ENCODE measurements at regions of chr7 and their contacts with region 1.

Region 1: GRCh38 chr7:76314042-76314721 is 11.7 kb downstream of the HSPB1 start:
- DNase-seq: peak; percentile 94 to 96
- H3K4me3 ChIP-seq: no peak overlapping the region
- H3K4me3 Mint-ChIP-seq: no peak overlapping the region
- H3K27ac Mint-ChIP-seq: peak overlapping the region; percentile 53
- H3K4me1 ChIP-seq: peaks cover 8% of the 10 kb centered on the region
- H3K4me1 Mint-ChIP-seq: peaks cover 13% of the 10 kb centered on the region
- H3K27me3 ChIP-seq: no peaks in the 10 kb centered on the region
- H3K27me3 Mint-ChIP-seq: no peaks in the 10 kb centered on the region
- CTCF ChIP-seq: peak; percentile 99

Region 2: GRCh38 chr7:76262683-76263402 is 51.3 kb before region 1 on chr7:
- CTCF ChIA-PET with region 1: interaction called, 4 read pairs
- POLR2A ChIA-PET with region 1: no interaction called
- intact Hi-C with region 1: loop called (anchors 1 kb)
- DNase-seq: peak; percentile 80
- H3K4me3 ChIP-seq: no peak overlapping the region
- H3K4me3 Mint-ChIP-seq: no peak overlapping the region
- H3K27ac Mint-ChIP-seq: no peak overlapping the region
- H3K4me1 ChIP-seq: peaks cover 5% of the 10 kb centered on the region; the same call in 1 of the 2 replicates
- H3K4me1 Mint-ChIP-seq: no peaks in the 10 kb centered on the region
- H3K27me3 ChIP-seq: no peaks in the 10 kb centered on the region; the same call in 1 of the 2 replicates
- H3K27me3 Mint-ChIP-seq: no peaks in the 10 kb centered on the region
- CTCF ChIP-seq: peak; percentile 70 to 87

Region 3: DNA sequence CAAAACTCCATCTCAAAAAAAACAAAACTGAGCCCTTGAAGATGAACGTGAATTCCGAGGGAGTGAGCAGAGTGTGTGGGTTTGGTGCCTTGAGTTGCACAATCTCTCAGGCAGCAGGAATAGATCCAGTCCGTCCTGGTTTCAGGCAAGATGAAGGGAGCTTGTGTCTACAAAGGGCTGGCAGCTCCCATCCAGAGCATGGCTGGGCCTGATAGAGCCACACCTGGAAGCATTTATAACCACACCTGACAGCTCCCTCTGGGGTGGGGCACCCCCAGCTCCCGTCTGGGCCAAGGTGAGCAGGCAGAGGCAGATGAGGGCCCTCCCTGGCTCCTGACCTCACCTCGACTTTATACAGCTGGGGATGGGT is 16.8 kb before region 1 on chr7:
- CTCF ChIA-PET with region 1: interaction called, 24 read pairs
- POLR2A ChIA-PET with region 1: interaction called, 5 read pairs
- intact Hi-C with region 1: loop called (anchors 1 kb)
- DNase-seq: peak; percentile 62 to 80
- H3K4me3 ChIP-seq: no peak overlapping the region
- H3K4me3 Mint-ChIP-seq: no peak overlapping the region
- H3K27ac Mint-ChIP-seq: no peak overlapping the region
- H3K4me1 ChIP-seq: peaks cover 39% of the 10 kb centered on the region
- H3K4me1 Mint-ChIP-seq: peaks cover 12% of the 10 kb centered on the region
- H3K27me3 ChIP-seq: no peaks in the 10 kb centered on the region
- H3K27me3 Mint-ChIP-seq: no peaks in the 10 kb centered on the region
- CTCF ChIP-seq: no peak

Region 4: GRCh38 chr7:76359111-76359978 is 45.2 kb after region 1 on chr7:
- CTCF ChIA-PET with region 1: interaction called, 5 read pairs
- POLR2A ChIA-PET with region 1: interaction called, 4 read pairs
- intact Hi-C with region 1: loop called (anchors 2 kb)
- DNase-seq: peak; percentile 99
- H3K4me3 ChIP-seq: peak overlapping the region; percentile 91
- H3K4me3 Mint-ChIP-seq: peak overlapping the region; percentile 87
- H3K27ac Mint-ChIP-seq: peak overlapping the region; percentile 89
- H3K4me1 ChIP-seq: peaks cover 19% of the 10 kb centered on the region
- H3K4me1 Mint-ChIP-seq: peaks cover under 1% of the 10 kb centered on the region
- H3K27me3 ChIP-seq: no peaks in the 10 kb centered on the region
- H3K27me3 Mint-ChIP-seq: no peaks in the 10 kb centered on the region
- CTCF ChIP-seq: peak; percentile 84 to 87

Region 5: DNA sequence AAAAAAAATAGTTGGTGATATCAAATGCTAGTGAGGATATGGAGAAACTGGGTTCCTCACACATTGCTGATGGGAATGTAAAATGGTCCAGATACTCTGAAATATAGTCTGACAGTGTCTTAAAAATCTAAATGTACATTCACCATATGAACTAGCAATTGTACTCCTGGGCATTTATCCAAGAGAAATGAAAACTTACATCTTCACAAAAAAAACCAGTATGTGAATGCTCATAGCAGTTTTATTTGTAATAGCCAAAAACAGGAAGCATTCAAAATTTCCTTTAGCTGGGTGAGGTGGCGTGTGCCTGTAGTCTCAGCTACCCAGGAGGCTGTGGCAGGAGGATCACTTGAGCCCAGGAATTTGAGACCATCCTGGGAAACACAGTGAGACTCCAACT is 97.4 kb after region 1 on chr7:
- CTCF ChIA-PET with region 1: no interaction called
- POLR2A ChIA-PET with region 1: no interaction called
- intact Hi-C with region 1: no loop called
- DNase-seq: no peak
- H3K4me3 ChIP-seq: no peak overlapping the region
- H3K4me3 Mint-ChIP-seq: no peak overlapping the region
- H3K27ac Mint-ChIP-seq: no peak overlapping the region
- H3K4me1 ChIP-seq: no peaks in the 10 kb centered on the region
- H3K4me1 Mint-ChIP-seq: no peaks in the 10 kb centered on the region
- H3K27me3 ChIP-seq: no peaks in the 10 kb centered on the region
- H3K27me3 Mint-ChIP-seq: no peaks in the 10 kb centered on the region
- CTCF ChIP-seq: no peak

Measured in Caco-2 (cell line).